ENCODE measurements at regions of chr1 and their contacts with region 1.

Region 1: GRCh38 chr1:5514519-5515183 is 477.6 kb downstream of the NPHP4 start:
- ATAC-seq: peak; percentile 53 to 95 (median 86)
- H3K4me3 ChIP-seq: no peak overlapping the region
- H3K27ac ChIP-seq: no peak overlapping the region
- H3K4me1 ChIP-seq: no peaks in the 10 kb centered on the region

Region 2: DNA sequence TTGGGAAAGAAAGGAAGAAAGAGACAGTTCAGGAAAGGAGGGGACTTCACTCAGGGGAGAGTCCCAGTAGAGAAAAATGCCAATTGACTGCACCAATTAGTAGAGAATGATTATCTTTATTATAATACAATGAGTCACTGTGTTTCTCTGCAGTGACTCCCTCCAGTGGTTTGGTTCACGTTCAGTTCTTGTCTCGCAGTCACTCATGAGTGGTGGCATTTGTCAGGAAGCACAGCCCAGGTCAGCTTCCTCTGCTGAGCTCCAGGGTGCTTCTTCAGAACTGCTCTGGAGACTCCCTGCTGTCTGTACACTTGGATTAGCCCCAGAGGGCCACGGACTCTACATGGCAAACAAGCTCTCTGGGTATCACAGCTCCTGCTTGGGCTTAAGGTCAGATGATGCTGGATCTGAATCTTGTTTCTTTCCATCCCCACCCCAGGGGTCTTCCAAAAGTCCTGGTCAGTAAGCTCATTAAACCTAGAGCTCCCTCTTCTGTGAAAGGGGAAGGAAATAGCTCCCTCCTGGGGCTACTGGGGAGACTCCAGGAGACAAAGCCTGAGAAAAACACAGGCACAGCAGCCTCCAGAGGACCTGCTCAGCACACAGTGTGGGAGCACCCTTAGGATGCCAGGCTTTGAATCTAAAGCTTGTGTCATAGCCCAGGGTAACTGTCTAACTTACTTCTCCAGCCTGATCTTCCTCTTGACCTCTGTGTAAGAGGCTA is 241.2 kb before region 1 on chr1:
- in situ Hi-C with region 1: no loop called
- ATAC-seq: peak in 3 of 8 experiments; percentile 32 to 54 (median 52)
- H3K4me3 ChIP-seq: no peak overlapping the region
- H3K27ac ChIP-seq: no peak overlapping the region
- H3K4me1 ChIP-seq: no peaks in the 10 kb centered on the region

Region 3: DNA sequence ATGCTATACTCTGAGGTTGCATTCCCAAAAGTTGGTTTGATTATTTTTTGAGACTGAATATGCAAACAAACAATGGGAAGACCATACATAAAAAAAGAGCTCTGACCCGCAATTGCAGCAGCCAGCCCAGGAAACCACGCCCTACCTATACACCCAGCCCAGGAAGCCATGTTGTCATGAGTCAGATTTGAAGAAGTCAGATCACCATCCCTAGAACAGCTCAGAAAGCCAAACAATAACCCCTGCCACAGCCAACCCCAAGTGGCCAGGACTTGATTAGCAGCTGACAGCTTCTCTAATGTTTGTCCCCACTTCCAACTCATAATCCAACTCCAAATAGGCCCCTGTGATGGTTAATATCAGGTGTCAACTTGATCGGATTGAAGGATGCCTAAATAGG is 144.3 kb before region 1 on chr1:
- in situ Hi-C with region 1: no loop called
- ATAC-seq: no peak
- H3K4me3 ChIP-seq: no peak overlapping the region
- H3K27ac ChIP-seq: no peak overlapping the region
- H3K4me1 ChIP-seq: peaks cover 3 to 5% of the 10 kb centered on the region in 2 donors

Region 4: GRCh38 chr1:5745776-5746610 is 231.3 kb after region 1 on chr1:
- in situ Hi-C with region 1: loop called in 2 of 9 experiments (anchors 25 kb)
- ATAC-seq: peak; percentile 78 to 98 (median 90)
- H3K4me3 ChIP-seq: no peak overlapping the region
- H3K27ac ChIP-seq: no peak overlapping the region
- H3K4me1 ChIP-seq: peaks cover 10 to 22% of the 10 kb centered on the region in 2 donors

Region 5: GRCh38 chr1:5770981-5771765 is 256.5 kb after region 1 on chr1:
- in situ Hi-C with region 1: loop called in 1 of 9 experiments (anchors 25 kb)
- ATAC-seq: peak in 4 of 8 experiments; percentile 15 to 89 (median 47)
- H3K4me3 ChIP-seq: no peak overlapping the region
- H3K27ac ChIP-seq: no peak overlapping the region
- H3K4me1 ChIP-seq: no peaks in the 10 kb centered on the region

Region 6: DNA sequence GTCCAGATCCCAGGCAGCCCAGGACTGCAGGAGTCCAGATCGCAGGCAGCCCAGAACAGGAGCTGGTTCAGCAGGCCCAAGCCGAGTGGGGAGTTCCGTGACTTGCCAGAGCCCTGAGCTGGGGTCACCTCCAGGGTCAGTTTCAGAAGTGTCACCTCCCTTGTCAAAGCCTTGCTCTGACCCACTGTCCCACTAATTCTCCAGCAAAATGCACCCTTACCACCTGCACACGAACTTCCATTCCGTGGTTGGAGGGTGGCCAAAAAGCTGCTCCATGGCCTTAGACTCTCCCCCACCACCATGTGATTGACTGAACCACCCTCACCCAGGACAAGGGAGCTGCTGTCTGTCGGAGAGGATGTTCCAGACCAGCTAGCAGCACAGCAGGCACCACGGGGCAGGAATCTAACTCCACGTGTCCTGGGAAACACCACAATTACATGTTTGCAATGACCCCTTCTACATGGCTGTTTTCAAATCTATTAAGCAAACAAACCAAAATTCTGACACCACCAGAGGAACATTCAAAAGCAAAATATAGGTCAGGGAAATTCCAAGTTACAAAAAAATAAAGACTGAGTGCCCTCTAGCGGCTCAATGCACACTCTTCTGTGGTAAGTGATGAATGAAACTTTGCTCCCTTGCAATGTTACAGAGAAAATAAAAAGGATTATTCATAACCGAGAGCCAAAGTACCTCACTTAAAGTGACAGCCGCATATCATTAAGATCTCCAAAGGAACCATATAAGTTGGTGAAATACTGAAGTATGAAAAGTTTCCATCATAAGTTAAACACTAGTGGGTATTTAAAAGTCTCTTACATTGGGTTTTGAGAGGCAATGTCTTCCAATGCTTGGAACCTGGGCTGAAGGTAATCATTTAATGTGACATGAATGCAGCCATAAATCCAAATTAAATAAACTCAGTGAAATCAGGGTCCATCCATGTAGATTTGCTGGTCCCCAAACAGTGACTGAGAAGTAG is 401.2 kb after region 1 on chr1:
- in situ Hi-C with region 1: loop called in 3 of 9 experiments (anchors 25 kb)
- ATAC-seq: peak; percentile 51 to 92 (median 62)
- H3K4me3 ChIP-seq: no peak overlapping the region
- H3K27ac ChIP-seq: no peak overlapping the region
- H3K4me1 ChIP-seq: peaks cover 8 to 17% of the 10 kb centered on the region in 2 donors